Activated T-helper 1 cell treated with anti-CD3 and anti-CD28 coated beads, Interleukin-12 subunit alpha, Interleukin-12 subunit beta, Interleukin-2, Interleukin-4 antibody, amounts not matched to agents 30 ng/mL and 10 ng/mL and 1 ng/mL, durations not matched to agents 14 hours and 24 hours and 36 hours (primary cell): ENCODE measurements at regions of chr14 and their contacts with region 1.

Region 1: DNA sequence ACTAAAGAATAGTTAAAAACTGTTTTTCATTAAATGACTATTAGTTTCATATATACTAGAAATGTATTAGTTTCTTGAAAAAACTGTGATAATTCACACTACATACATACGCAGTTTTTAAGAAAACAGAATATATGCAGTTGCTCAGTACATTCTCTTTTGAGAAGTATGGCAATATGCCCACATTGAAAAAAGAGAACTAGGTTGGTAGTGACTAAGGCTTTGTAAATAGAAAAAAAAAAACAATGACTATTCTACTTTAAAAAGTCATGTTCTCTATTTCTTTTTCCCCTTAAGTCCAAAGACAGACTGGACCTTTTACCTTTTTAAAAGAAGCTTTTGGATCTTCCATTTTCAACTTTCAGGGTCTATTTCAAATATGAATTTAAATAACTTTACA is 25.0 kb downstream of the SNX6 start:
- DNase-seq: no peak
- H3K4me3 Mint-ChIP-seq: no peak overlapping the region
- H3K27ac Mint-ChIP-seq: no peak overlapping the region
- H3K4me1 Mint-ChIP-seq: no peaks in the 10 kb centered on the region
- H3K27me3 Mint-ChIP-seq: no peaks in the 10 kb centered on the region

Region 2: DNA sequence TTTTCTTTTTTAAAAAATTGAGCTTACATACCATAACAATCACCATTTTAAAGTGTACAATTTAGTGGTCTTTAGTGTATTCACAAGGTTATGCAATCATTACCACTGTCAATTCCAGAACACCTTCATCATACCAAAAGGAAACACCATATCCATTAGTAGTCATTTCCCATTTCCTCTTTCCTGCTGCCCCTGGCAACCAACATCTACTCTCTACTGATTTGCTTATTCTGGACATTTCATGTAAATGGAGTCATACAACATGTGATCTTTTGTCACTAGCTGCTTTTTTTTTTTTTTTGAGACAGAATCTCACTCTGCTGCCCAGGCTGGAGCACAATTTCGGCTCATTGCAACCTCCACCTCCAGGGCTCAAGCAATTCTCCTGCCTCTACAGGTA is 176.2 kb after region 1 on chr14:
- intact Hi-C with region 1: loop called (anchors 5 kb)
- DNase-seq: no peak
- H3K4me3 Mint-ChIP-seq: no peak overlapping the region
- H3K27ac Mint-ChIP-seq: peak overlapping the region; percentile 64
- H3K4me1 Mint-ChIP-seq: peaks cover 8% of the 10 kb centered on the region
- H3K27me3 Mint-ChIP-seq: no peaks in the 10 kb centered on the region